CD4-positive, alpha-beta memory T cell (primary cell): ENCODE measurements at regions of chr19 and their contacts with region 1.

Region 1: DNA sequence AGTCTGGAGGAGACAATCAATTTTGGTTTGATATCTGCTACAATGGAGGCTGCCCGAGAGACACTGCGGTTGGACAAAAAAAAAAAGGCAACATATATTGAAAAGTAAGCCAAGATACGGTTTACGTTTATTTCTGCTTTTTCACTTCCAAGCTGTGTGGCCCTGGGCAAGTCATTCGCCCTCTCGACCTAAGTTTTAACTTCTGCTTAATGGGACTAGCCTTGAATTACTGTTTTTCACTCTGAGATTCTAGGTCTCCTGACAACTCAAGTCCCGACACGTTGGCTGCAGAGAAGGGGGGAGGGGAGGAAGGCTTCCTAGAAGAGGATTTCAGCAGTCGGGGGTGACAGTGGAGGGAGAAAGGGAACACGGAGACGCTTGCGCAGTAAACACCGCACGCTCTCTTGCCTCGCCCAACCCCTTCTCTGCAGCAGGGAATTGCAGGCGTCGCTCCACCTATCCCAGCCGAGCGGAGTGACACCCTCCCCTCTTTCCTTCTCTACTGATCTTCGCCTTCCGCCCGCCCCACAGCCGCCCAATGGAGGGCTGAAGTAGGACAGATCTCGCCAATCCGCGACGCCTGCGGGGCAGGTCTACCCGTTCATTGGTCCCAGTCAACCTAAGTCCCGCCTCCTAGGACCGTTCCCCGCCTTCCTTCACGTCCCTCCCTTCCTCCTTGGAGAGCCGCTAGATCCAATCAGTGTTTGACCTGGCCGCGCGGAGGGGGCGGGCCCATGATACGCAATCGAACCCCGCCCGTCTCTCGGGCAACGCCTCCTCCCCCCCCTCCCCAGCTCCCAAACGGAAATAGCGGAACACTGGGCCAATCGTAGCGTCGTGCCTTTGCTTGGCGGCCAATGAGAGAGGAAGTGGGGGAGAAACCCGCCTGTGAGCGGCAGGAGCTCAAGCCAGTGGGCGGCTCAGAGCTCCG is 529 bp upstream of the AP2A1 start:
- DNase-seq: peak; percentile 98 to 100 (median 100)
- H3K4me3 ChIP-seq: peak overlapping the region; percentile 75 to 88
- H3K4me3 Mint-ChIP-seq: peak overlapping the region; percentile 89 to 99 (median 94)
- H3K27ac ChIP-seq: peak overlapping the region; percentile 77
- H3K27ac Mint-ChIP-seq: peak overlapping the region; percentile 85 to 97 (median 96)
- H3K4me1 ChIP-seq: peaks cover 36% of the 10 kb centered on the region
- H3K4me1 Mint-ChIP-seq: peaks cover 30 to 48% (median 34%) of the 10 kb centered on the region in 4 donors
- H3K27me3 ChIP-seq: no peaks in the 10 kb centered on the region
- H3K27me3 Mint-ChIP-seq: no peaks in the 10 kb centered on the region

Region 2: DNA sequence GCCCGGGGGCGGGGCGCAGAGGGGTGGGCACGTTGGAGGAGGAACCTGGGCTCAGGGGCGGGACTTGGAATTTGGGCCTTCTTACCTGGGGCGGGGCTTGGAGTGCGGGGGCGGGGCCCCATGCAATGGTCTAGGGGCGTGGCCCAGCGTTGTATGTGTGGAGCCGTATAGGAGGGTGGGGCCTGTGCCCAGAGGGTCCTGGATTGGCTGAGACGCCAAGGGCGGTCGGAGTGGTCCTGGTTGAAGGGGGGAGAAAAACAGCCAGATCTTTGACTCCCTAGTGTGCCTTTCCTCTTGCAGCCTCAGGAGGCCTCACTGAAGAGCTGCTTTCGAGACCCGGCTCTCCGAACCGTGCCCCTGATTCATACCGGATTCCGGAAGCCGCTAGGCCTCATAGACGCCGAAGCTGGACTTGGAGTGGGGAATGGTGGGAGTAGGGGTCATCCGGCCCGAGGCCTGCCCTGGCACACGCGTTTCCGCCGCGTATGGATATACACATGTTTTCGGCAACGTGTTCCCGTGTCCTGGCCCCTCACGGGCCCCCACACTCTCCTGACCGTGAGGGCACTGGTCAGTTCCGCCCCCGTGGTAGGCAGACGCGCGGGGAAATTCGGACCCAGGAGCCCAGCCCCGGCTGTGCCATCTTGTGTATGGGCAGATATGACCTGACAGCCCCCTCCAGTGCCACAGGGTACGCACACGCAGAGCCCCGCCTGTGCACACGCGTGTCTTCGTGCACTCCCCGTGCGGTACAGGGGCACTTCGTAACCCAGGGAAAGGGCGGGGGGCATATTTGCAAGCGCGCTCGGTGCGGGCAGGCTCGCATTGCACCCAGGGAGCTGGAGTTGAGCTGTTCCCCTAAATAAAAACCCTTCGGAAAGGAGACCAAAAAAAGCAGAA is 176.0 kb before region 1 on chr19:
- CTCF ChIA-PET with region 1: no interaction called
- POLR2A ChIA-PET with region 1: no interaction called
- intact Hi-C with region 1: loop called (anchors 5 kb)
- DNase-seq: peak; percentile 94 to 96 (median 95)
- H3K4me3 ChIP-seq: peak overlapping the region; percentile 68 to 95
- H3K4me3 Mint-ChIP-seq: peak overlapping the region; percentile 81 to 95 (median 93)
- H3K27ac ChIP-seq: peak overlapping the region; percentile 74
- H3K27ac Mint-ChIP-seq: peak overlapping the region; percentile 84 to 97 (median 94)
- H3K4me1 ChIP-seq: peaks cover 23% of the 10 kb centered on the region
- H3K4me1 Mint-ChIP-seq: peaks cover 21 to 48% (median 31%) of the 10 kb centered on the region in 4 donors
- H3K27me3 ChIP-seq: no peaks in the 10 kb centered on the region
- H3K27me3 Mint-ChIP-seq: no peaks in the 10 kb centered on the region

Region 3: GRCh38 chr19:49718511-49718910 is 47.8 kb before region 1 on chr19:
- CTCF ChIA-PET with region 1: interaction called, 8 read pairs
- POLR2A ChIA-PET with region 1: interaction called, 15 read pairs
- intact Hi-C with region 1: loop called (anchors 1 kb)
- DNase-seq: no peak
- H3K4me3 ChIP-seq: no peak overlapping the region
- H3K4me3 Mint-ChIP-seq: peak overlapping the region in 6 of 8 donors; percentile 15 to 96 (median 49)
- H3K27ac ChIP-seq: no peak overlapping the region
- H3K27ac Mint-ChIP-seq: peak overlapping the region in 5 of 7 donors; percentile 25 to 98 (median 79)
- H3K4me1 ChIP-seq: peaks cover 12% of the 10 kb centered on the region
- H3K4me1 Mint-ChIP-seq: peaks cover 7 to 12% (median 10%) of the 10 kb centered on the region in 4 donors
- H3K27me3 ChIP-seq: no peaks in the 10 kb centered on the region
- H3K27me3 Mint-ChIP-seq: no peaks in the 10 kb centered on the region

Region 4: GRCh38 chr19:49817964-49818648 is 51.8 kb after region 1 on chr19 and contains the start of gene MED25:
- CTCF ChIA-PET with region 1: no interaction called
- POLR2A ChIA-PET with region 1: interaction called, 24 read pairs
- intact Hi-C with region 1: loop called (anchors 1 kb)
- DNase-seq: peak; percentile 90 to 96 (median 95)
- H3K4me3 ChIP-seq: peak within 1 kb of the TSS; percentile 64 to 88
- H3K4me3 Mint-ChIP-seq: peak within 1 kb of the TSS; percentile 89 to 99 (median 99)
- H3K27ac ChIP-seq: peak within 1 kb of the TSS; percentile 95
- H3K27ac Mint-ChIP-seq: peak within 1 kb of the TSS; percentile 98 to 100 (median 100)
- H3K4me1 ChIP-seq: peaks cover 33% of the 10 kb centered on the region
- H3K4me1 Mint-ChIP-seq: peaks cover 17 to 54% (median 36%) of the 10 kb centered on the region in 4 donors
- H3K27me3 ChIP-seq: no peaks in the 10 kb centered on the region
- H3K27me3 Mint-ChIP-seq: no peaks in the 10 kb centered on the region
- total RNA-seq, gene MED25: 41.8 to 48.8 TPM